GM10248 (cell line): ENCODE measurements at regions of chr5 and their contacts with region 1.

Region 1: DNA sequence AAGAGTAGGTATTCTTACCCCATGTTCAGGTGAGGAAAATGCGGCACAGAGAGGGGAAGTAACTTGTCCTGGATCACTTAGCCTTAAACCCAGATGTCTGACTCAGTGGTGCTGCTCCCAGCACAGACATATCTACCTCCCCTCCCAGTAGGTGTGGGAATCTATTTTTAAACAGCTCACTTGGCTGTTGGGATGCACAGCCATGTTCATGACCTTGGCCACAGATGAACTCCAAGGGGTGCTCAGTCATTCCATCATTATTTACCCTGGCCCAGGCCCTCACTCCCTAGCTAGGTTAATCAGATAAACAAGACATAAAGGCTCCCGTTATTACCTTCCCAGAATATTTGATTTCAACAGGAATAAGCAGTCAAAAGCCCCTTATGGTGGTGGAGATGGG is 88.4 kb upstream of the IQGAP2 start:
- DNase-seq: no peak
- CTCF ChIP-seq: no peak

Region 2: GRCh38 chr5:76145945-76146344 is 168.7 kb before region 1 on chr5:
- CTCF ChIA-PET with region 1: no interaction called
- POLR2A ChIA-PET with region 1: no interaction called
- DNase-seq: peak; percentile 18
- CTCF ChIP-seq: peak; percentile 24

Region 3: GRCh38 chr5:76292620-76293322 is 21.9 kb before region 1 on chr5:
- CTCF ChIA-PET with region 1: interaction called, 30 read pairs
- POLR2A ChIA-PET with region 1: no interaction called
- DNase-seq: peak; percentile 38
- CTCF ChIP-seq: no peak

Region 4: GRCh38 chr5:76303921-76304320 is 10.7 kb before region 1 on chr5:
- CTCF ChIA-PET with region 1: interaction called, 34 read pairs
- POLR2A ChIA-PET with region 1: no interaction called
- DNase-seq: peak; percentile 43
- CTCF ChIP-seq: no peak